MCF 10A (cell line): ENCODE measurements at regions of chr5 and their contacts with region 1.

Region 1: GRCh38 chr5:168647083-168647482 is 67.9 kb upstream of the PANK3 start:
- DNase-seq: peak; percentile 99
- H3K4me3 Mint-ChIP-seq: peak overlapping the region; percentile 25
- H3K27ac Mint-ChIP-seq: peak overlapping the region; percentile 93
- H3K4me1 Mint-ChIP-seq: peaks cover 44% of the 10 kb centered on the region
- H3K27me3 Mint-ChIP-seq: no peaks in the 10 kb centered on the region
- CTCF ChIP-seq: no peak

Region 2: DNA sequence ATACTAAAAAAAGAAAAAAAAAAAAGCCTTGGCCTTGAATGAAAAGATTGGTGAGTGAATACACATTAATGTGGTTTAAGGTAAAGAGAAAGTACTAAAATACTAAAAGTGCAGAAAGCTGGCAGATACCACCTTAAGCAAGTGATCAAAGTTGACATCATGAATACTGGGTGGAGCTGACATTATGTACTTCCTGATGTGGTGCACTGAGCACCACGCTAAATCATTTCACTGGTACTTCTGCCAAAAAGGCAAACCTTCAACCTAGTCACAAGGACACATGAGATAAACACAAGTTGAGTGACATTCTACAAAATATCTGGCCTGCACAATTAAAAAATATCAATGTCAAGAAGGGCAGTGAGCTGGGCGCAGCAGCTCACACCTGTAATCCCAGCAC is 34.1 kb before region 1 on chr5:
- CTCF ChIA-PET with region 1: interaction called, 3 read pairs
- POLR2A ChIA-PET with region 1: interaction called, 19 read pairs
- intact Hi-C with region 1: no loop called
- DNase-seq: no peak
- H3K4me3 Mint-ChIP-seq: no peak overlapping the region
- H3K27ac Mint-ChIP-seq: no peak overlapping the region
- H3K4me1 Mint-ChIP-seq: peaks cover 7% of the 10 kb centered on the region
- H3K27me3 Mint-ChIP-seq: no peaks in the 10 kb centered on the region
- CTCF ChIP-seq: no peak

Region 3: DNA sequence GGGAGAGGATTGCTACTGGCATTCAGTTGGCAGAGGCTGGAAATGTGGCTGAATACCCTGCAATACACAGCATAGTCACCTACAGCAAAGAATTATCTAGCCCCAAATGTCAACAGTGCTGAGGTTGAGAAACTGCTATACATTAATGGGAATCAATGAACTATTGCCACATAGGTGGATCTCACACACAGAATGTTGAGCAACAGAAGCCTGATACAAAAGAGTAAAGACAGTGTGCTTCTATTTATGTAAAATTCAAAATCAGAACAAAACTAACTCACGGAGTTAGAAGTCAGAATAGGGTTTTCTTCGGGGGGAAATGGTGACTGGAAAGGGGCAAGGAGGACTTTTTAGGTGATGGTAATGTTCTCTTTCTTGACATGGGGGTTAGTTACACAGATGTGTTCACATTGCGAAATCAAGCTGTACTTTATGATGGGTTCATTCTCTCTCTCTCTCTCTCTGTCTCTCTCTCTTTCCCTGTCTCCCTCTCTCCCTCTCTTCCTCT is 22.2 kb before region 1 on chr5:
- CTCF ChIA-PET with region 1: interaction called, 7 read pairs
- POLR2A ChIA-PET with region 1: interaction called, 26 read pairs
- intact Hi-C with region 1: no loop called
- DNase-seq: peak; percentile 91
- H3K4me3 Mint-ChIP-seq: peak overlapping the region; percentile 4
- H3K27ac Mint-ChIP-seq: peak overlapping the region; percentile 16
- H3K4me1 Mint-ChIP-seq: peaks cover 23% of the 10 kb centered on the region
- H3K27me3 Mint-ChIP-seq: peaks cover 4% of the 10 kb centered on the region
- CTCF ChIP-seq: no peak

Region 4: DNA sequence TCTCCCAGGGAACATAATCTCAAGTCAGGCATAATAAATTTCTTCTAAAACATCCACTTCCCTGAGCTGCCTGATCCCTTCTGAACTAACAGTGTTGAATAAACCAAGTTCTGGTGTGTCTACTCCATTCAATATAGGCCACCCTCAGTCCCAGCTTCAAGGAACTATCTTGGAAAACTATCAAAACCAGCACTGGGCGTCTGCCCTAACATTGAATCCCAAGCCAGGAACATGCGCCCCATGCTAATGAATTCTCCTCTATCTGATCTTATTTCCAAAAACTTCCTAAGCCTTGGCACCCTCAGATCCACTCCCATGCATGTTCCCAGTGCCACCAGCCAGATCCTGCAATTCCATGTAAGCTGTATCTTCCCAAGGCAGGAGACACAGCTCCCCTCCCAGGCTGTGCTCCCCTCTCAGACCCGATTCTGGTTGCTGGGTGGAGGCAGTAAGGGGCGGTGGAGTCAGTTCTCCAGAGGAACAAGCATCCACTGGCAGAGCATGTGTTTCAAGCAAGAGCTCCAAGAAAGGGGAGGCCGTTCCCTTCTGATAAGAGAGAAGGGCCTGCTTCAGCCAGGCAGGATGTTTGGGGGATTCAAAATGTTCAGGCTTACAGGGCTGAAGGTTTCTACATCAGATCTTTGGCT is 1445.5 kb after region 1 on chr5:
- CTCF ChIA-PET with region 1: no interaction called
- POLR2A ChIA-PET with region 1: no interaction called
- intact Hi-C with region 1: no loop called
- DNase-seq: no peak
- H3K4me3 Mint-ChIP-seq: no peak overlapping the region
- H3K27ac Mint-ChIP-seq: no peak overlapping the region
- H3K4me1 Mint-ChIP-seq: no peaks in the 10 kb centered on the region
- H3K27me3 Mint-ChIP-seq: no peaks in the 10 kb centered on the region
- CTCF ChIP-seq: no peak